Naive thymus-derived CD4-positive, alpha-beta T cell (primary cell): ENCODE measurements at regions of chr12 and their contacts with region 1.

Region 1: DNA sequence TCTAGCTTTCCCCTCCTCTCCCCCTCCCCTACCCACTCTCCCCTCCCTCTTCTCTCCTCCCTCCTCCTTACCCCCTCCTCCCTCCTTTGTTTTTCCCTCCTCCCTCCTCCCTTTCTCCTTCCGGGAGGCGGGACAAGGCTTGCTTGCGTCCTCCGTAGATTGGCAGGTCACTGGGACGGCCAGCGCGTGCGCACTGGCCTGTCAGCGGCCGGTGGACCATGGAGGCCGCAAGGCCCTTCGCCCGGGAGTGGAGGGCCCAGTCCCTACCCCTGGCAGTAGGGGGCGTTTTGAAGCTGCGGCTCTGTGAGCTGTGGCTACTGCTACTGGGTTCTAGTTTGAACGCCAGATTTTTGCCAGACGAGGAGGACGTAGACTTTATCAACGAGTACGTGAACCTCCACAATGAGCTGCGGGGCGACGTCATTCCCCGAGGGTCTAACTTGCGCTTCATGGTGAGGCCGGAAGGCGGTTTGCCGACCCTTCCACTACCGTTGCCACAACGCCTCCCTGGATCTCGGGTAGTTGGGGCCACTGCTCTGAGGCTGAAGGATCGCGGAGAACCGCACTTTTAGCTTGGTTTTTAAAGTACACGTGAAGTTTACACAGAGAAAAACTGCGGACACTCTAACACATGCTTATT is at the start of gene GLIPR1L2:
- DNase-seq: peak; percentile 75 to 86 (median 80)
- ATAC-seq: peak; percentile 96
- H3K4me3 ChIP-seq: peak within 1 kb of the TSS; percentile 67
- H3K4me3 Mint-ChIP-seq: peak within 1 kb of the TSS; percentile 87 to 98 (median 94)
- H3K27ac ChIP-seq: peak within 1 kb of the TSS; percentile 79
- H3K27ac Mint-ChIP-seq: peak within 1 kb of the TSS; percentile 93 to 99 (median 98)
- H3K4me1 ChIP-seq: peaks cover 14 to 19% of the 10 kb centered on the region in 2 donors
- H3K4me1 Mint-ChIP-seq: peaks cover 26 to 61% (median 44%) of the 10 kb centered on the region in 7 donors
- H3K27me3 ChIP-seq: no peaks in the 10 kb centered on the region
- H3K27me3 Mint-ChIP-seq: peaks cover 0 to 3% (median 0%) of the 10 kb centered on the region in 5 donors
- total RNA-seq, gene GLIPR1L2: 0.22 to 2.3 (median 0.38) TPM

Region 2: GRCh38 chr12:74537707-74538385 is 853.2 kb before region 1 on chr12 and contains the start of gene ATXN7L3B:
- CTCF ChIA-PET with region 1: no interaction called
- POLR2A ChIA-PET with region 1: no interaction called
- intact Hi-C with region 1: loop called in 1 of 2 experiments (anchors 2 kb)
- DNase-seq: peak; percentile 94 to 98 (median 97)
- ATAC-seq: peak; percentile 97
- H3K4me3 ChIP-seq: peak within 1 kb of the TSS; percentile 85
- H3K4me3 Mint-ChIP-seq: peak within 1 kb of the TSS; percentile 87 to 99 (median 97)
- H3K27ac ChIP-seq: peak within 1 kb of the TSS; percentile 94
- H3K27ac Mint-ChIP-seq: peak within 1 kb of the TSS; percentile 96 to 100 (median 99)
- H3K4me1 ChIP-seq: peaks cover 27 to 32% of the 10 kb centered on the region in 2 donors
- H3K4me1 Mint-ChIP-seq: peaks cover 39 to 60% (median 54%) of the 10 kb centered on the region in 7 donors
- H3K27me3 ChIP-seq: no peaks in the 10 kb centered on the region
- H3K27me3 Mint-ChIP-seq: no peaks in the 10 kb centered on the region
- total RNA-seq, gene ATXN7L3B: 25.6 to 51.6 (median 46.9) TPM

Region 3: DNA sequence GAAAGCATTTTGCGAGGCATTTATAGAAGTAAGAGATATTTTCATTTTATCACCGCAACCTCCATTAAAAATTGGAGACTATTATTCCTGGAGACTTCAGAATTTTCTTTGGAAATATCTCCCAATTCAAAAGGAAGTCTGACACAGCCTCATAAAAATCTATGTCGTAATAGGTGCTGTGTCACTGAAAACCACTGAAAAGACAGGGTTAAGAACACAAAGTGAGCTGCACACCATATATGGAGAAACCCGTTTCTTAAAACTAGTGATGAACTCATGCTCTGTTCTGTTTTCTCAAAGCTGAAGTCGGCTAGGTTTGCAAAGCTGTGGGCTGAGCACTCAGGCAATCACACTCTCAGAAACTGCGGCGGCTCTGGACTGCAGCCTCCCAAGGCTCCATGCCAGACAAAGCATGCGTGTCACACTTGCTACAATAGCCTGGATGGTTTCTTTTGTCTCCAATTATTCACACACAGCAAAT is 89.5 kb after region 1 on chr12 and contains the start of gene GLIPR1:
- CTCF ChIA-PET with region 1: interaction called, 14 read pairs
- POLR2A ChIA-PET with region 1: interaction called, 31 read pairs
- intact Hi-C with region 1: loop called (anchors 1 kb)
- DNase-seq: peak; percentile 54 to 83 (median 76)
- ATAC-seq: peak; percentile 86
- H3K4me3 ChIP-seq: peak within 1 kb of the TSS; percentile 82
- H3K4me3 Mint-ChIP-seq: peak within 1 kb of the TSS; percentile 86 to 99 (median 97)
- H3K27ac ChIP-seq: peak within 1 kb of the TSS; percentile 73
- H3K27ac Mint-ChIP-seq: peak within 1 kb of the TSS; percentile 92 to 100 (median 97)
- H3K4me1 ChIP-seq: peaks cover 49 to 54% of the 10 kb centered on the region in 2 donors
- H3K4me1 Mint-ChIP-seq: peaks cover 50 to 85% (median 75%) of the 10 kb centered on the region in 7 donors
- H3K27me3 ChIP-seq: no peaks in the 10 kb centered on the region
- H3K27me3 Mint-ChIP-seq: no peaks in the 10 kb centered on the region
- total RNA-seq, gene GLIPR1: 28.2 to 132 (median 48.7) TPM

Region 4: DNA sequence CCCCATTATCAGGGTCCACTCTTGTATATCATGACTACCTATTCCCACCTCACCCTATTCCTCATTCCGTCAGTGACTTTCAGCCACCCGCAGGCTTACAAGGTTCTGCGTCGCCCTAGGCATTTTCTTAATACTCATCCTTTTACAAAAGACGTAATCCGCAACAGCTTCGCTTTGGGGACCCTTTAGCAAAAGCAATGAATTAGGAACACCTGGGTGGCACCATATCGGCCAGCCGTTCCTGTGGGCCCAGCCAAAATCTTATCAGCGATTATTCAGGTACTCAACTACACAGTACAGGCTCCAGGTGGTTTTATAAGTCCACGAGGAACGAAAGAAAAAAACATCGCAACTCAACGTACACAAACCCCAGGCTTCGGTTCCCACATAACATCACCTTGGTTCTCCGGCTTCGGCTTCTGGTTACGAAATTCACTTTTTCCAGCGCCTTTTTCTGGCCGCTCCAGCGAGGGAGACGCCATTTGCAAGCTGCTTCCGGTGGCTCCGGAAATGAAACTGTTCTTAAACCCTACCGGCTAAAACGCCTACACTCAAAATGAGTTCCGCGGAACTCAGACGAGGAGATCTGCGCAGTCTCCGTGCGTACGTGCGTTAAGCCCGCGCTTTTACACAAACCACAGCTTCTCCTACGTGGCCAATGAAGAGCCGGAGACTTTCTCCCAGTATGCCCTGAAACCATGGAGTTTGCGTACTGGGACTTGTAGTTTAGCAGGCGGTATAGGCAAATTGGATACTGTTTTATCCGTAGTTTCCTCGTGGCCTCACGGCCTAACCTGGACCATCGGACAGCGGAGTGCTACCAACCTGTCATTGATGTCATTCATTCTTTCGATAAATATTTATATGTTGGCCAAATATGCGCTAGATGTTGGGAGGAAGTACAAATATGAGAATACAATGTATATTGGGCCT is 120.4 kb after region 1 on chr12 and contains the start of gene KRR1:
- CTCF ChIA-PET with region 1: interaction called, 4 read pairs
- POLR2A ChIA-PET with region 1: interaction called, 13 read pairs
- intact Hi-C with region 1: loop called (anchors 1 kb)
- DNase-seq: peak; percentile 60 to 93 (median 90)
- ATAC-seq: peak; percentile 98
- H3K4me3 ChIP-seq: peak within 1 kb of the TSS; percentile 90
- H3K4me3 Mint-ChIP-seq: peak within 1 kb of the TSS; percentile 96 to 100 (median 99)
- H3K27ac ChIP-seq: peak within 1 kb of the TSS; percentile 89
- H3K27ac Mint-ChIP-seq: peak within 1 kb of the TSS; percentile 96 to 100 (median 99)
- H3K4me1 ChIP-seq: peaks cover 13% of the 10 kb centered on the region in 2 donors
- H3K4me1 Mint-ChIP-seq: peaks cover 15 to 47% (median 38%) of the 10 kb centered on the region in 7 donors
- H3K27me3 ChIP-seq: no peaks in the 10 kb centered on the region
- H3K27me3 Mint-ChIP-seq: no peaks in the 10 kb centered on the region
- total RNA-seq, gene KRR1: 69.3 to 120 (median 74.3) TPM

Region 5: DNA sequence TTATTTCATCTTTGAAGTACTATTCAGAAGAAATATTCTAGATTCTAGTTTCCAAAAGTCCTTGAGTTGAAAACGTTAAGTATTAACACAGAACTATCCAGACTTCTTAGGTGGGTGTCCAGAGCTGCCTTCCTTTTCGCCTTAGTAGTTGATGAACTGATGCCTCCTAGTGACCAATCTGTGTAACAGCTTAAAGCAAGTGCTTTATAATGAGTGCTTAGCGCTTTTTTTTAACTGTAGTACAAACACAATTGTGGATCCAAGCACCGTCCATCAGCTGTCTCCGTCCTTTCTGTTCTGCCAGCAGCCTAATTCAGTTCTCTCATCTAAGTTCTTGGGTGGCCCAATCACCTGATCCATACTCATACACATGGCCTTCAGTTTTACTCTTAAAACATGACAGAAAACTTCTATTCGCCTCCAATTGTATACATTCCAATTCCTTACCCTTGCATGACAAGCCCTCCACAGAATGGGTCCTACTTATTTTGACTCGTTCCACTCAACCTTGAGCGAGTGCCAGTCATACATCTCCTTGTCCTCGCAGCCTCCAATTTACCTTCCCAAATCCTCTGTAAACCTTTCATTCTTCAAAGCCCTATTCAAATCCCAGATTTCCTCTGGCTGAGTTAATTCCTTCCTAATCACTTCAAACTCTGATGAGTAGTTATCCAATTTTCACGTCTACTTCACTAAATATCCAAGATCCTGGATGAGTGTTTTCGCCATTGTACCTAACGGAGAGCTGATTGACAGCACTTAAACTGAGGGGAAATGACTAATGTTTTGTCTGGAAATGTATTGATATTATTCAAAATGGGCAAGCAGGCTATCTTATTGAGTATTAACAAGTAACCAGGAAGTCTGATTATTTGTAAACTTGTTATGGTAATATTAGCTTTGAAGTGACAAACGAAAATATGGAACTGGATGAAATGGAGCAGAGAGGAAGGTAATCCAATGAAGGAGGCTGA is 646.4 kb after region 1 on chr12:
- CTCF ChIA-PET with region 1: interaction called, 3 read pairs
- POLR2A ChIA-PET with region 1: interaction called, 3 read pairs
- intact Hi-C with region 1: loop called in 1 of 2 experiments (anchors 2 kb)
- DNase-seq: peak in 7 of 9 donors; percentile 46 to 63 (median 55)
- ATAC-seq: peak; percentile 87
- H3K4me3 ChIP-seq: no peak overlapping the region
- H3K4me3 Mint-ChIP-seq: no peak overlapping the region
- H3K27ac ChIP-seq: no peak overlapping the region
- H3K27ac Mint-ChIP-seq: peak overlapping the region in 1 of 9 donors; percentile 1
- H3K4me1 ChIP-seq: peaks cover 0 to 4% of the 10 kb centered on the region in 2 donors
- H3K4me1 Mint-ChIP-seq: peaks cover 5 to 29% (median 12%) of the 10 kb centered on the region in 7 donors
- H3K27me3 ChIP-seq: no peaks in the 10 kb centered on the region
- H3K27me3 Mint-ChIP-seq: no peaks in the 10 kb centered on the region

Region 6: DNA sequence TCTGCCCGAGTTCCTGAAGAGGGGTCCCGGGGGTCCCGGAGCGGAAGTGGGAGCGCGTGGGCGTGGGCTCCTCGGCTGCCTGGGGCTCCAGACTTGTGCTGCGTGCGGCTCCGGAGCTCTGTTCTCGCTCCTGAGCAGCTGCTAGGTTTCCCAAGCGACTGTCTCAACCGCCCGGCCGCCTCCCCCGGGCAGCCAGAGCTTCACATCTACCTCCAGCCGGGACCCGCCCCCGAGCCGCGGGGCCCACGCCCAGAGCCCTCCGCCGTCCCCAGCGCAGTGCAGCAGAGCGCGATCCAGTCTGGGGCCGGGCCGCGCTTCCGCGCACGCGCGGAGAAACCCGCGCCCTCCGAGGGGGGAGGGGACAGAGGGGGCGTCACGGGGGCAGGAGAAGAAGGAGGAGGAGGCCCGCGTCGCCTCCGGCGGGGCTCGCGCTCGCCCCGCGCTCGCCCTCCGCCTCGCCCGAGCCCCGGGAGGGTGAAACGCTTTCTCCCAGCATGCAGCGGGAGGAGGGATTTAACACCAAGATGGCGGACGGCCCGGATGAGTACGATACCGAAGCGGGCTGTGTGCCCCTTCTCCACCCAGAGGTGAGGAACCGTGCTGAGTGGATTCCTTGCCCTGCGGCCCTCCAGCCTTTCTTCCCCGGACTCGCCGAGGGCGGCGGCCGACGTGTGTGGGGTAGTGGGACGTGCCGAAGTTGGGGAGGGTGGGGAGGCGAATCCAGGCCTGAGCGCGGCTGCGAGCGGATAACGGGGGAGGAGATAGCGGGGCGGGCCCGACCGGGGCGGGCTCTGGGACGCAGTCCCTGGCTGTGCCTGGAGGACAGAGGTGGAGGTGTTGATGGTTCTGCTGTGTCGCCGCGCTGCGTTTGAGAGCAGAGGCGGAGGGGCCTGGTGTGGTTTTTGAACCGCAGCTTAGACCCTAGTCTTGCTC is 1373.0 kb after region 1 on chr12 and contains the start of gene ZDHHC17:
- CTCF ChIA-PET with region 1: no interaction called
- POLR2A ChIA-PET with region 1: no interaction called
- intact Hi-C with region 1: loop called in 1 of 2 experiments (anchors 2 kb)
- DNase-seq: peak; percentile 90 to 95 (median 93)
- ATAC-seq: peak; percentile 90
- H3K4me3 ChIP-seq: peak within 1 kb of the TSS; percentile 84
- H3K4me3 Mint-ChIP-seq: peak within 1 kb of the TSS; percentile 92 to 98 (median 97)
- H3K27ac ChIP-seq: peak within 1 kb of the TSS; percentile 94
- H3K27ac Mint-ChIP-seq: peak within 1 kb of the TSS; percentile 95 to 99 (median 97)
- H3K4me1 ChIP-seq: peaks cover 8 to 13% of the 10 kb centered on the region in 2 donors
- H3K4me1 Mint-ChIP-seq: peaks cover 17 to 57% (median 46%) of the 10 kb centered on the region in 7 donors
- H3K27me3 ChIP-seq: no peaks in the 10 kb centered on the region
- H3K27me3 Mint-ChIP-seq: peaks cover 0 to 13% (median 0%) of the 10 kb centered on the region in 5 donors
- total RNA-seq, gene ZDHHC17: 27.3 to 60.9 (median 56.3) TPM